Activated T-helper 2 cell treated with anti-CD3 and anti-CD28 coated beads, Interferon-gamma antibody, Interleukin-2, Interleukin-4, amounts not matched to agents 10 μg/mL and 5 μg/mL and 100 μg/mL, durations not matched to agents 14 hours and 24 hours and 36 hours (primary cell): ENCODE measurements at regions of chr6 and their contacts with region 1.

Region 1: GRCh38 chr6:130620338-130620781 is 206.8 kb upstream of the SMLR1 start:
- DNase-seq: no peak
- H3K4me3 Mint-ChIP-seq: no peak overlapping the region
- H3K27ac Mint-ChIP-seq: no peak overlapping the region
- H3K4me1 Mint-ChIP-seq: peaks cover 51% of the 10 kb centered on the region
- H3K27me3 Mint-ChIP-seq: no peaks in the 10 kb centered on the region

Region 2: DNA sequence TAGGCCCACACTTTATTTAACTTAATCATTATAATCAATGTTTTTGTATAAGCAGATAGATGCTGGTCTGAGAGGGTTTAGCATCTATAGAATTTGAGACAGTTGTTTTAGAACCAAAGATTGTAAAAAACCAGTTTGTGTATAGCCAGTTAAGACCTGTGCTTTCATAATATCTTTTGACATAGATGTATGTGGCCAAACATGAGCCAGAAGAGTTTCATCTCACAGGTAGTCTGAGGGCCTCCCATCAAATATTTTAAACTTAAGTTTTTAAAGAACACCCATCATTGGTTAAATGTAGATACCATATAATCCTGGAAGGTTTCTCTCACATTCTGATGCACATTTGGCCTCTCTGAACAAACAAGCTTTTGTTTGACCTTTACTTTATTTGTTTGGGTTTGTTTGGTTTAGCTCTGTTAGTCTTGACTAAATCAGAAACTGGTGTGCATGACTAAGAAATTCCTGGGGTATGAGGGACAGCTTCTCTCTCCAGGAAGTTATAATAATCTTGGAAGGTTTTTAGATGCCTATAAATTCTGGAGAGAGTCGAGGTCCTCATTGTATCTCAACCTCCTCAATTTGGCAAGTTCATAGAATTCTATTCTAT is 312.5 kb before region 1 on chr6:
- intact Hi-C with region 1: loop called (anchors 5 kb)
- DNase-seq: no peak
- H3K4me3 Mint-ChIP-seq: no peak overlapping the region
- H3K27ac Mint-ChIP-seq: no peak overlapping the region
- H3K4me1 Mint-ChIP-seq: peaks cover 17% of the 10 kb centered on the region
- H3K27me3 Mint-ChIP-seq: no peaks in the 10 kb centered on the region

Region 3: DNA sequence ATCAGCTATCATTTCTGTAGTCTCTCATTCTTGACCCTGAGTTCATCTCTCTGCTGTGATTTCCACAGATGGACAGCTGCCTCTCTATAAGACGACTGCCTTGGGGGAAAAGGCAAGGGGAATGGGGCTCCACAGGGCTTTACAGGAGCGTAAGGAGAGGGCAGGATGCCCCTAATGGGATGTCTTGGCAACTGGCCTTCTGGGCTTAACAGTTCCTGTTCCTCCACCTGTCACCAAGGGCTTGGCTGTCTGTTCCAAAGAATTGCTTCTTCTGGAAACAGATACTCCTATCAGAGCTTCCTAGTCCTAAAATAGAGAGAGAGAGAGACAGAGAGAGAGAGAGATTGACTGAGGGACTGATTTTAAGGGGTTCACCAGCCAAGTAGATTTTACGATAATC is 72.6 kb before region 1 on chr6:
- intact Hi-C with region 1: no loop called
- DNase-seq: no peak
- H3K4me3 Mint-ChIP-seq: no peak overlapping the region
- H3K27ac Mint-ChIP-seq: no peak overlapping the region
- H3K4me1 Mint-ChIP-seq: peaks cover 2% of the 10 kb centered on the region
- H3K27me3 Mint-ChIP-seq: no peaks in the 10 kb centered on the region

Region 4: DNA sequence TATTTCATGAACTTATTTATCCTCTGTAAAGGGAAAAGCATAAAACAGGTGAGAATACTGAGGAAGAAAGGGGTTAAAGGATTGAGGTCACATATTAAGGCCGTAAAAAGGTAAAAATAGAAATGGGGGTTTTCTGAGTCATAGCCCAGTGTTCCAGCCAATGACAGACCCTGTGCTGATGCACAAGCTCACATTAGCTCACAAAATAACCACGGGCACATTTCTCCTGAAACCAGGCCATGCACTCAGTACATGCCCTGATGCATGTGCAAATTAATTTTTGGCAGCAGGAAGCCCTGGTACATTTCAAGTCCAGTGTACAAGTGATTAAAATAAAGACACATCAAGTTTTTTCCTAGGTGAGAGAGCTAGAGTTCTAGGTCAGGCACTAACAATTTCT is 60.1 kb before region 1 on chr6:
- intact Hi-C with region 1: loop called (anchors 5 kb)
- DNase-seq: no peak
- H3K4me3 Mint-ChIP-seq: no peak overlapping the region
- H3K27ac Mint-ChIP-seq: no peak overlapping the region
- H3K4me1 Mint-ChIP-seq: peaks cover 28% of the 10 kb centered on the region
- H3K27me3 Mint-ChIP-seq: no peaks in the 10 kb centered on the region

Region 5: GRCh38 chr6:130602151-130602770 is 18.1 kb before region 1 on chr6:
- intact Hi-C with region 1: loop called (anchors 1 kb)
- DNase-seq: no peak
- H3K4me3 Mint-ChIP-seq: no peak overlapping the region
- H3K27ac Mint-ChIP-seq: peak overlapping the region; percentile 35
- H3K4me1 Mint-ChIP-seq: peaks cover 33% of the 10 kb centered on the region
- H3K27me3 Mint-ChIP-seq: no peaks in the 10 kb centered on the region

Region 6: GRCh38 chr6:130697995-130698535 is 77.7 kb after region 1 on chr6:
- intact Hi-C with region 1: loop called (anchors 5 kb)
- DNase-seq: peak; percentile 51
- H3K4me3 Mint-ChIP-seq: no peak overlapping the region
- H3K27ac Mint-ChIP-seq: peak overlapping the region; percentile 29
- H3K4me1 Mint-ChIP-seq: peaks cover 18% of the 10 kb centered on the region
- H3K27me3 Mint-ChIP-seq: no peaks in the 10 kb centered on the region

Region 7: GRCh38 chr6:130900913-130901312 is 280.6 kb after region 1 on chr6:
- intact Hi-C with region 1: no loop called
- DNase-seq: no peak
- H3K4me3 Mint-ChIP-seq: no peak overlapping the region
- H3K27ac Mint-ChIP-seq: no peak overlapping the region
- H3K4me1 Mint-ChIP-seq: no peaks in the 10 kb centered on the region
- H3K27me3 Mint-ChIP-seq: peaks cover 1% of the 10 kb centered on the region